ENCODE measurements at regions of chr6 and their contacts with region 1.

Region 1: DNA sequence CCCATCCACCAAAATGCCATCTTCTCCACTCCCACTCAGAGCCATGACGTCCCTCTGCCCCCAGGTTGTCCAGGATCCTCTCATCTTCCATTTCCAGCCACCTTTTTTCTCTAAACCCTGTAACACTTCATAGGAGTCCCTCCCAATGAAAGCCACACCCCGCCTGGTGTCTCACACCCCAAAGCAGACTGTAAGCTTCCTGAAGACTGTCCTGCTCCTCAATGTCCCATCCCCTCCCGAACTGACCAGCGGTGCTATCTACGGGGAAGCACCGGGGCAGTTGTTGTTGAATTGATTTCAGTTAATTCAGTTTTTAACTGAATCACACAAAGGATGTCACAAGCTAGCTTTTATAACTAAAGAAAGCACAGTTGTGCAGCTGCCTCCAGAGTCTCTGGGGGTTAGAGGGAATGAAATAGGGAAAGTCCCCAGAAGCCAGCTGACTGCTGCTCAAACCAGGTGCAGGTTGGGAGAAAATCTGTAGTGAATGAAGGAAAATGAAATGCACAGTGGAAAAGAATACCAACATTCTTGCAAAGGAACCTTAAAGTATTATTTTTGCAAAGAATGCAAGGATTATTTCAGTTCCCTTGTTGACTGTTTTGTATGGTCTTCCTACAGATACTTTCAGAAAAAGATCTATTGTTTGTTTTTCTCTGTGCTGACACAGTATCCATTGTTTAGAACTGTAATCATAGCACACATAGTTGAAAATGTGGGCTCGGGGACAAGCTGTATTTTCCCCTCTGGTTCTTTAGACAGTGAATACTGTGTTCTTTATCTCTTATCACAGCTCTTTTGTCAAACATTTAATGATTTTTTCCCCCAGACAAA is 222.6 kb upstream of the QKI start:
- DNase-seq: peak in 22 of 42 donors; percentile 6 to 81 (median 62)

Region 2: DNA sequence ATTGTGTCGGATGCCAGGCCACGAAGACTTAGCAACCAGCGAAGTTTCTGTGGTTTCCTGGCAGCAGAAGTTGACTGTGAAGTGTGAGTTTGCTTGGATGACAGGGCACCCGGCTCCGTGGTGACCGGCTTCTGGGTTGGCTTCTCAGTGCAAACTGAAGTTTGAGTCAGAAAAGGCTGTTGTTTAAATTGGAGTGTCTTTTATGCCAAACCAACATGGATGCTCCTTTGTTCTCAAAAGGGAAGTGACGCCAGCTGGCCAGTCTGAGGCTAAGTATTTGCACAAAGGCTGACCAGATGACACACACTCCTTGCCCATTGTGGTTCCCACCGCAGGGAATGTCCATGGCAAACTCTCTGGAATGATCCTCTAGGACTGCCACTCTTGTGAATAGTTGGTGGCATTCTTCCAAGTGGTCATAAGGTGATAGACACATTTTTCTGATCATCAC is 57.8 kb after region 1 on chr6:
- intact Hi-C with region 1: loop called (anchors 5 kb)
- DNase-seq: peak in 31 of 42 donors; percentile 32 to 82 (median 59)

Region 3: GRCh38 chr6:163347021-163347446 is 155.1 kb after region 1 on chr6:
- intact Hi-C with region 1: loop called (anchors 5 kb)
- DNase-seq: peak in 1 of 42 donors; percentile 72

Region 4: DNA sequence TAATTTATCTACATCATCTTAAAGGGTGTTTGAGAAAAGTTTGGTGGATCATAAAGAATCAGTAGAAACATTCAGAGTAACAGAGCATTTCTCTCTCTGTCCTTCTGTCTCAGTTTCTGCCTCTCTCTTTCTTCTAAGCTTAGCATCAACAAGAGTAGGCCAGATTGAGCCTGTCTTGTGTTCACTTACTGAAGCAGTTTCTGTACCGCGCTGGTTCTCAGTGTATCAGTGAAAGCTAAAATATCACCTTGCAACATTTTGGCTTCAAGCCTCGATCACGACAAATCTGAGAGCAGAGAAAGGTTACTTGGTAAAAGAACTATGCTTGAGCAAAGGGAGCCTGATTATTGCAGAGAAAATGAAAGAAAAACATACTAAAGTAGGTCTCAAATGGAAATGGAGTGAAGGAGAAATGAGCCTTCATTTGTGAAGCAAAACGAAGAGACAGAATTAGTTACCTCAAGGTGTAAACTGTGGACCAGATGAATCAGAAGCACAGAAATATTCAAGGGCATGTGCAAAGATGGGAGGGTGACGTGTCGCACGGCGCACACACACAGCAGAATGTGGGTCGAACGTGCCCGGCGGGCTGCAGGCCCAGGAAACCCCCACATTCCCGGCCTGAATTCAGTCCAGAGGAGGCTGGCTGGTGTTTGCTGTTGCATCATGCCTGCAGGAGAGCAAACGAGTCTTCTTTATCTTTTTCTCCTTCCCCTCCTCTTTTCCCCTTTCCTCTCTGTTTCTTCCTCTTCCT is 731.9 kb after region 1 on chr6:
- intact Hi-C with region 1: no loop called
- DNase-seq: peak in 5 of 42 donors; percentile 11 to 64 (median 41)